ENCODE measurements at regions of chr12 and their contacts with region 1.

Region 1: DNA sequence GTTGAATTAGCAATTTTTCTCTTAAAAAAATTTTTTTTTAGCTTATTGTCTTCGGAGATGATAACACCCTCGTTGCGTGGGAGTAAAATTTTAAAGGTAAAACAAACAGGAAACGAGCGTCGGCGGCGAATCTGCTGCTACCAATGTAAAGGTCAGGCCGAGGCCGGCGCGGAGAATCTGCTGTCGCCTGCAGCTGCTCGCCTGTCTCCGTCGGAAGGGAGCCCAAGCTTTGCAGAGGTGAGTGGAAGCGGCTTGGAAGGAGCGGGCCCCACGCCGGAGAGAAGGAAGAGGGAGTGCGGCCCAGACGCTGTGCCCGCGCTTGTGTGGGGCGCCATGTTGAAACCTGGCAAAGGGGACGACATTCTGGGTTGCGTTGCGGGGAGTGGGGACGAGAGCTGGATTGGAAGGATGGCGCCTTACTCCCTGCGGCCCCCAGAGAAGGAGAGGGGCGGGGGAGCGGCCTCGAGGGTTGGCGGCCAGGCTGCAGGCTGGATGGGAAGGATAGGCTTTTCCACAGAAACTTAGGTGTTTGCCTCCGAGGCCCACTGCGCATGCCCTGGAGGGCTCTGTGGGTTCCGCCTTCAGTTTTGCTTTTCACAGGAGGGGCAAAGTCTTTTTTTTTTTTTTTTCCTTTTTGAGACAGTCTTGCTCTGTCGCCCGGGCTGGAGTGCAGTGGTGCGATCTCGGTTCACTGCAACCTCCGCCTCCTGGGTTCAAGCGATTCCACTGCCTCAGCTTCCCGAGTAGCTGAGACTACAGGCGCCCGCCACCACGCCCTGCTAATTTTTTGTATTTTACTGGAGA is at the start of gene SNRNP35:
- H3K4me3 Mint-ChIP-seq: peak within 1 kb of the TSS; percentile 96
- H3K27ac Mint-ChIP-seq: peak within 1 kb of the TSS; percentile 100
- H3K4me1 Mint-ChIP-seq: peaks cover 17% of the 10 kb centered on the region
- H3K27me3 Mint-ChIP-seq: no peaks in the 10 kb centered on the region

Region 2: DNA sequence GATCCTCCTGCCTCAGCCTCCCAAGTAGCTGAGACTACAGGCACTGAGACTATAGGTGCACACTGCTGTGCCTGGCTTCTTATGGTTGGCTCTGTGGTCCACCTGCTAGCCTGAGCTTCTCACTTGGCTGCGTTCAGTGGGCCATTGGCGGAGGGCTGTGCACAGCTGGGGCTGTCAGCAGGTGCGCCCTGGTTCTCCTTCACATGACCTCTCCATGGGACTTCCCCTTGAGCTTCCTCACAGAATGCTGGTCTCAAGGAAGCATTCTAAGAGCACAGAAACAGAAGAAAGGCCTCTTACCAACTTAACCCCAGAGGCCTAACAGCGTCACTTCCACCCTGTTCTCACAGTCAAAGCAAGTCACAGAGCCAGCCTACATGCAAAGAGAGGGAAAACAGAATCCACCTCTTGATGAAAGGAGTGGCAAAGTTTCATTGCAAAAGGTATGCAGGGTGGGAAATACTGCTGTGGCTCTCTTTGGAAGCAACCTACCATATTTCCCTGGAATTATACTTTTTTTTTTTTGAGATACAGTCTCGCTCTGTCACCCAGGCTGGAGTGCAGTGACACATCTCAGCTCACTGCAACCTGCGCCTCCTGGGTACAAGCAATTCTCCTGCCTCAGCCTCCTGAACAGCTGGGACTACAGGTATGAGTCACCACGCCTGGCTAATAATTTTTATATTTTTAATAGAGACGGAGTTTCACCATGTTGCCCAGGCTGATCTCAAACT is 31.0 kb before region 1 on chr12:
- intact Hi-C with region 1: loop called (anchors 5 kb)
- H3K4me3 Mint-ChIP-seq: no peak overlapping the region
- H3K27ac Mint-ChIP-seq: no peak overlapping the region
- H3K4me1 Mint-ChIP-seq: peaks cover 7% of the 10 kb centered on the region
- H3K27me3 Mint-ChIP-seq: no peaks in the 10 kb centered on the region

Measured in dendritic cell treated with granulocyte-macrophage colony-stimulating factor and Interleukin-4, amounts not matched to agents 40 ng/mL and 50 ng/mL, for 4 days (primary cell).